Caco-2 (cell line): ENCODE measurements at regions of chr15 and their contacts with region 1.

Region 1: DNA sequence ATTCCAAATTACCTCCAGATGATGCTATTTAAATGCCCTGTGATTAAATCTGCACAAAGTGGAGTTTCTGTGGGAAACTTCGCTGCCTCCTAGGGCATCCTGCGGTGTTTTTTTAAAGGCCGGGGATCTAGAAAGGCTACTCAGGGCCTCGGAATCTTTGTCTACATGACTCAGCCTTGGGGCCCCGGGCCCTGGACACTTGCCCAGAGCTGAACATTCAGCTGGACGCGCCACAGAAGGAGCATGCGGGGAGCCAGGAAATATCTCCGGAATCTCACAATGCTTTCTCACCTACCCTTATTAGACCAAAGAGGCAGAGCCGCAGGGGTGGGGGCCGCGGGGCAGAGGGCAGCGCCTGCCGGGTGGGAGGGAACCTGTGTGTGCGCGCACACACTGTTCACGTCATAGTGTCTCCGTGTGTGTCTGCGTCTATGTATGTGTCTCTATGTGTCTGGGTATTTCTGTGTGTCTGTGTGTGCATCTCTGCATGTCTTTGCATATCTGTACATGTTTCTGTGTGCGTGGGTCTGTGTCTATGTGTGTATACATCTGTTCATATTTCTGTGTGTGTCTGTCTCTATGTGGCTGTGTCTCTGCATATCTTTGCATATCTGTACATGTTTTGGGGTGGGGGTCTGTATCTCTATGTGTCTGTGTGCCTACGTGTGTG is 145.4 kb upstream of the TPM1 start:
- DNase-seq: peak; percentile 81 to 90
- H3K4me3 ChIP-seq: 0 out of 2 replicates have a peak overlapping the region, but pooled peaks have one; percentile 1
- H3K4me3 Mint-ChIP-seq: peak overlapping the region; percentile 55
- H3K27ac Mint-ChIP-seq: peak overlapping the region; percentile 53
- H3K4me1 ChIP-seq: peaks cover 48% of the 10 kb centered on the region
- H3K4me1 Mint-ChIP-seq: peaks cover 41% of the 10 kb centered on the region
- H3K27me3 ChIP-seq: no peaks in the 10 kb centered on the region
- H3K27me3 Mint-ChIP-seq: no peaks in the 10 kb centered on the region
- CTCF ChIP-seq: no peak

Region 2: GRCh38 chr15:62835351-62835750 is 61.8 kb before region 1 on chr15:
- CTCF ChIA-PET with region 1: no interaction called
- POLR2A ChIA-PET with region 1: no interaction called
- intact Hi-C with region 1: no loop called
- DNase-seq: no peak
- H3K4me3 ChIP-seq: no peak overlapping the region
- H3K4me3 Mint-ChIP-seq: no peak overlapping the region
- H3K27ac Mint-ChIP-seq: no peak overlapping the region
- H3K4me1 ChIP-seq: peaks cover 13% of the 10 kb centered on the region
- H3K4me1 Mint-ChIP-seq: peaks cover 6% of the 10 kb centered on the region
- H3K27me3 ChIP-seq: no peaks in the 10 kb centered on the region
- H3K27me3 Mint-ChIP-seq: no peaks in the 10 kb centered on the region
- CTCF ChIP-seq: no peak

Region 3: GRCh38 chr15:63595065-63595464 is 698.0 kb after region 1 on chr15:
- CTCF ChIA-PET with region 1: no interaction called
- POLR2A ChIA-PET with region 1: interaction called, 10 read pairs
- intact Hi-C with region 1: no loop called
- DNase-seq: no peak
- H3K4me3 ChIP-seq: no peak overlapping the region
- H3K4me3 Mint-ChIP-seq: no peak overlapping the region
- H3K27ac Mint-ChIP-seq: no peak overlapping the region
- H3K4me1 ChIP-seq: no peaks in the 10 kb centered on the region; the same call in 1 of the 2 replicates
- H3K4me1 Mint-ChIP-seq: no peaks in the 10 kb centered on the region
- H3K27me3 ChIP-seq: no peaks in the 10 kb centered on the region
- H3K27me3 Mint-ChIP-seq: no peaks in the 10 kb centered on the region
- CTCF ChIP-seq: no peak